K562 (cell line): ENCODE measurements at regions of chr6 and their contacts with region 1.

Region 1: DNA sequence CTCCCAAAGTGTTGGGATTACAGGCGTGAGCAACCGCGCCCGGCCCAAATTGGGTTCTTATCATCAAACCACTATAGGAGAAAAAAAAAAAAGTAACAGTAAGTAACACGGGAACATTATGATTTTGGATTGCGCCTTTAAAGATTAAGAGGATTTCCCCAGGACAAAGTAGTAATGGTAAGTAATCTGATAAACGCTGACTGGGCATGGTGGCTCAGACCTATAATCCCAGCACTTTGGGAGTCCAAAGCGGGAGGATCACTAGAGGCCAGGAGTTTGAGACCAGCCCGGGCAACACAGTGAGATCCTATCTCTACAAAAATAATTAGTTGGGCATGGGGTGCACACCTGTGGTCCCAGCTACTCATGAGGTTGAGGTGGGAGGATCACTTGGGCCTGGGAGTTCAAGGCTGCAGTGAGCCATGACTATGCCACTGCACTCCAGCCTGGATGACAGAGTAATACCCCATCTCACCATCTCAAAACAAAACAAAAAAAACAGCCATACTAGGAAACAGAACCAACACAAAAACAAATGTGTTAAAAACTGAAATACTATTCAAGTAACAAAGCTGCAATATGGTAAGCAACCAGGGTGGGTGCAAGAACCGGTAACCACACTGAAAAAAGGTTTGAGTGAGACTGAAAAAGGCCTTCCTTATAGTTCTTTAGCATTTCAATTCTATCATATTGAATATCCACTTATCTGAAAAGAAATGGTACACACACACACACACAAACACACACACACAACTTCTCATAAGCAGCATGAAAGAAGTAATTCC is 8.2 kb downstream of the C6orf62 start:
- DNase-seq: no peak
- ATAC-seq: no peak
- H3K4me3 ChIP-seq: no peak overlapping the region
- H3K27ac ChIP-seq: no peak overlapping the region
- H3K4me1 ChIP-seq: no peaks in the 10 kb centered on the region; a peak in 1 of 5 replicates
- H3K27me3 ChIP-seq: no peaks in the 10 kb centered on the region
- CTCF ChIP-seq: no peak
- EP300 ChIP-seq: no peak
- POLR2A ChIP-seq: no peak
- RAD21 ChIP-seq: no peak

Region 2: DNA sequence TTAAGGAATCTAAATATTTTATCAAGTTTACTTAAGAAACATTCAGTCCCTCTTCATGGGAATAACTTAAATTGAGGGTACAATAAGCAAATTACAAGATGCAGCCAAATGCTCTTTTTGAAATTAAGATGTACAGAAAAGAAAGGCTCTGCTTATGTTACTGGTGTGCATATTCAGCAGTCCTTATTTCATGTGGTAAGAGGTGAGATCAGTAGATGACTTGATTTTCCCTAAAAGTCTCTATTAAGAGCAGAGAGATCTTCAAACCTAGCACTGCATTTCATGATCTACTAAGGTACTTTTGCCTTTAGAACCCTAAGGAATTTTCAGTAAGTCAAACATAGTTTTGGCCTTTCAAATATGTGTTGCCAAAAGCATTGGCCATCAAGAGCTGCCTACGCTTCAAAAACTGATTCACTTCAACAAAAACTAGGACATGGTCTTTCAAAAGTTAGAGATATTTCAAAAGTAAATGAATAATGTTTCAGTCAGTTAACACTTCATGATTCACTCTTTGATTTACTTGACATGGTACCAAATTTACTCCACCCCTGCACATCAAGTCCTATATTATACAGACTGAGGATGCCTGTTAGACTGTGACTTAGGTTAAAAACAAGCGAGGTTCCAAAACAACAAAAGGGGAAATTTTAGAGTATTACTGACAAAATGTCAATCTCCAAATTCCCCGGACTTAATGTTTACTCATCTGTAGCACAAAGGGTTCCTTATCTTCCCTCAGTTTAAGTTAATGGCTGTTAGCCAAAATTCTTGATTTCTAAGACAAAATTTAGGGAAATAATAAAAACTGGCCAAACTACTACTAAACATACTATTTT is 11.0 kb before region 1 on chr6:
- CTCF ChIA-PET with region 1: no interaction called
- POLR2A ChIA-PET with region 1: interaction called, 14 read pairs
- in situ Hi-C with region 1: no loop called
- intact Hi-C with region 1: no loop called
- DNase-seq: no peak
- ATAC-seq: no peak
- H3K4me3 ChIP-seq: no peak overlapping the region
- H3K27ac ChIP-seq: no peak overlapping the region
- H3K4me1 ChIP-seq: no peaks in the 10 kb centered on the region
- H3K27me3 ChIP-seq: no peaks in the 10 kb centered on the region
- CTCF ChIP-seq: no peak
- EP300 ChIP-seq: no peak
- POLR2A ChIP-seq: no peak
- RAD21 ChIP-seq: no peak

Region 3: GRCh38 chr6:24734166-24734565 is 23.5 kb after region 1 on chr6:
- CTCF ChIA-PET with region 1: no interaction called
- POLR2A ChIA-PET with region 1: no interaction called
- in situ Hi-C with region 1: no loop called
- intact Hi-C with region 1: no loop called
- DNase-seq: no peak
- ATAC-seq: no peak
- H3K4me3 ChIP-seq: no peak overlapping the region
- H3K27ac ChIP-seq: no peak overlapping the region
- H3K4me1 ChIP-seq: no peaks in the 10 kb centered on the region; a peak in 1 of 5 replicates
- H3K27me3 ChIP-seq: no peaks in the 10 kb centered on the region
- CTCF ChIP-seq: no peak
- EP300 ChIP-seq: no peak
- POLR2A ChIP-seq: no peak
- RAD21 ChIP-seq: no peak

Region 4: DNA sequence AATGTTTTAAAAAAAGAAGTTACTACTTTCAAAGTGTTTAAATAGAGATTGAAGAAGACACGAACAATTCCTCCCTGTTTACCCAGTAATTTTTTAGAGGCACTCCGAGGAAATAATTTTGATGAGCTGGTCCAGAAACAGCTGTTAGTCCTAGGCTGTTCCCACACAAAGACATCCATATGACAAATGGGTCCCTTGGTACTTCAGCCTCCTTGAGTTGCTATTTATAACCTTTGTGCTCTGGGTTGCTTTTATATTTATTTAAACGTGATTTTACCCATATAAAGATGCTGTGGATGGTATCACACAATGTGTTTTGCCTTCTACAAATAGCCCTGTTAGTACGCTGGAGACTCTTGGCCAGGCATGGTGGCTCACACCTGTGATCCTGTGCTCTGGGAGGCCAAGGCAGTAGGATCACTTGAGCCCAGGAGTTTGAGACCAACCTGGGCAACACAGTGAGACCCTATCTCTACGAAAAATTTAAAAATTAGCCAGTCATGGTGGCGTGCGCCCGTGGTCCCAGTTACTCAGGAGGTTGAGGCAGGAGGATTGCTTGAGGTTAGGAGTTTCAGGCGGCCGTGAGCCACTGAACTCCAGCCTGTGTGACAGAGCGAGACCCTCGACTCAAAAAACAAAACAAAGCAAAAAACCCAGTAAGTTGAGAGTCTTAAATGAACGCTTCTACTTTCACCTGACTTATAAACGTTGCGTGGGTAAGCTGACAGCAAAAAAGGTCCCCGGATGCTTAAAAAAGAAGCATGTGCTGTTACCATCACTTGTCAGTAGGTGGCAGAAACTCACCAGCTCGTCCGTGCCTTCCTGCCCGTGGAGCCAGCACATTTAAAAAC is 144.9 kb after region 1 on chr6:
- CTCF ChIA-PET with region 1: no interaction called
- POLR2A ChIA-PET with region 1: no interaction called
- in situ Hi-C with region 1: no loop called
- intact Hi-C with region 1: no loop called
- DNase-seq: peak; percentile 79 to 83 (median 80)
- ATAC-seq: peak; percentile 94
- H3K4me3 ChIP-seq: no peak overlapping the region
- H3K27ac ChIP-seq: no peak overlapping the region
- H3K4me1 ChIP-seq: no peaks in the 10 kb centered on the region
- H3K27me3 ChIP-seq: peaks cover 13 to 24% of the 10 kb centered on the region in 2 experiments
- CTCF ChIP-seq: peak; percentile 84 to 93 (median 86)
- EP300 ChIP-seq: no peak
- POLR2A ChIP-seq: no peak
- RAD21 ChIP-seq: peak; percentile 89

Region 5: GRCh38 chr6:24902782-24903181 is 192.1 kb after region 1 on chr6:
- CTCF ChIA-PET with region 1: no interaction called
- POLR2A ChIA-PET with region 1: no interaction called
- in situ Hi-C with region 1: no loop called
- intact Hi-C with region 1: no loop called
- DNase-seq: no peak
- ATAC-seq: 0 out of 3 replicates have a peak, but pooled peaks have one; percentile 35
- H3K4me3 ChIP-seq: no peak overlapping the region
- H3K27ac ChIP-seq: no peak overlapping the region
- H3K4me1 ChIP-seq: no peaks in the 10 kb centered on the region
- H3K27me3 ChIP-seq: peaks cover 24 to 26% of the 10 kb centered on the region in 2 experiments; a peak in 4 of 5 replicates
- CTCF ChIP-seq: no peak
- EP300 ChIP-seq: no peak
- POLR2A ChIP-seq: no peak
- RAD21 ChIP-seq: no peak

Region 6: DNA sequence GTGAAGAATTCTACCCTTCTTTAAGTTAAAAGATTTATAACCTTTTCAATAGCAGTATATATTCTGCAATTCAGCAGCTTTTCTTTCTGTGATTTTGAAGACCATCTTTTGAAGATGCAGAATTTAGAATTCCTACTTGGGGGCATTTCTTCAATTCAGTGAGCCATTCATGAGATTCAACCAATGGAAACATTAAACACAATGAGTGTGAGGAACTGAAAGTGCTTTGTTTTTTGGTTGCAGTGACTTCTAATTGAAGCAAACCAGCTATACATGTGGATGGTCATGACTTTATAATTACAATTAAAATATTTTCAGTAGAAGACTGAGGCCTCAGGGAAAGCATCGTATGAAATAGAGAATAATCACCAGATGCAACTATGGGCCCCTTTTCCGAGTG is 676.8 kb after region 1 on chr6:
- CTCF ChIA-PET with region 1: no interaction called
- POLR2A ChIA-PET with region 1: no interaction called
- in situ Hi-C with region 1: no loop called
- intact Hi-C with region 1: no loop called
- DNase-seq: no peak
- ATAC-seq: no peak
- H3K4me3 ChIP-seq: no peak overlapping the region
- H3K27ac ChIP-seq: no peak overlapping the region
- H3K4me1 ChIP-seq: no peaks in the 10 kb centered on the region
- H3K27me3 ChIP-seq: 0 out of 5 replicates have a peak, but pooled peaks cover 0 to 4% of the 10 kb centered on the region in 2 experiments
- CTCF ChIP-seq: no peak
- EP300 ChIP-seq: no peak
- POLR2A ChIP-seq: no peak
- RAD21 ChIP-seq: no peak